Motor neuron (in vitro differentiated cells): ENCODE measurements at regions of chr10 and their contacts with region 1.

Region 1: GRCh38 chr10:116796910-116797513 is 52.3 kb upstream of the ENO4 start:
- ATAC-seq: peak; percentile 75 to 98 (median 84)
- H3K4me3 ChIP-seq: no peak overlapping the region
- H3K27ac ChIP-seq: no peak overlapping the region
- H3K4me1 ChIP-seq: peaks cover 2 to 6% of the 10 kb centered on the region in 2 donors

Region 2: GRCh38 chr10:116470768-116471415 is 326.1 kb before region 1 on chr10:
- in situ Hi-C with region 1: loop called in 1 of 9 experiments (anchors 25 kb)
- ATAC-seq: peak in 6 of 8 experiments; percentile 28 to 78 (median 54)
- H3K4me3 ChIP-seq: no peak overlapping the region
- H3K27ac ChIP-seq: no peak overlapping the region
- H3K4me1 ChIP-seq: peaks cover 2 to 12% of the 10 kb centered on the region in 2 donors

Region 3: GRCh38 chr10:116690356-116691322 is 106.4 kb before region 1 on chr10:
- in situ Hi-C with region 1: loop called in 4 of 9 experiments (anchors 25 kb)
- ATAC-seq: peak in 5 of 8 experiments; percentile 40 to 52 (median 48)
- H3K4me3 ChIP-seq: no peak overlapping the region
- H3K27ac ChIP-seq: no peak overlapping the region
- H3K4me1 ChIP-seq: peaks cover 10 to 11% of the 10 kb centered on the region in 2 donors

Region 4: GRCh38 chr10:116985611-116986010 is 188.6 kb after region 1 on chr10:
- in situ Hi-C with region 1: no loop called
- ATAC-seq: no peak
- H3K4me3 ChIP-seq: no peak overlapping the region
- H3K27ac ChIP-seq: no peak overlapping the region
- H3K4me1 ChIP-seq: no peaks in the 10 kb centered on the region

Region 5: GRCh38 chr10:117096599-117097201 is 299.7 kb after region 1 on chr10:
- in situ Hi-C with region 1: no loop called
- ATAC-seq: no peak
- H3K4me3 ChIP-seq: no peak overlapping the region
- H3K27ac ChIP-seq: no peak overlapping the region
- H3K4me1 ChIP-seq: peaks cover 3 to 12% of the 10 kb centered on the region in 2 donors

Region 6: GRCh38 chr10:117167789-117168674 is 371.0 kb after region 1 on chr10:
- in situ Hi-C with region 1: loop called in 7 of 9 experiments (anchors 5 to 25 kb)
- ATAC-seq: peak; percentile 83 to 93 (median 88)
- H3K4me3 ChIP-seq: peak overlapping the region in 3 of 5 donors; percentile 9 to 20 (median 17)
- H3K27ac ChIP-seq: no peak overlapping the region
- H3K4me1 ChIP-seq: peaks cover 0 to 4% of the 10 kb centered on the region in 2 donors

Region 7: DNA sequence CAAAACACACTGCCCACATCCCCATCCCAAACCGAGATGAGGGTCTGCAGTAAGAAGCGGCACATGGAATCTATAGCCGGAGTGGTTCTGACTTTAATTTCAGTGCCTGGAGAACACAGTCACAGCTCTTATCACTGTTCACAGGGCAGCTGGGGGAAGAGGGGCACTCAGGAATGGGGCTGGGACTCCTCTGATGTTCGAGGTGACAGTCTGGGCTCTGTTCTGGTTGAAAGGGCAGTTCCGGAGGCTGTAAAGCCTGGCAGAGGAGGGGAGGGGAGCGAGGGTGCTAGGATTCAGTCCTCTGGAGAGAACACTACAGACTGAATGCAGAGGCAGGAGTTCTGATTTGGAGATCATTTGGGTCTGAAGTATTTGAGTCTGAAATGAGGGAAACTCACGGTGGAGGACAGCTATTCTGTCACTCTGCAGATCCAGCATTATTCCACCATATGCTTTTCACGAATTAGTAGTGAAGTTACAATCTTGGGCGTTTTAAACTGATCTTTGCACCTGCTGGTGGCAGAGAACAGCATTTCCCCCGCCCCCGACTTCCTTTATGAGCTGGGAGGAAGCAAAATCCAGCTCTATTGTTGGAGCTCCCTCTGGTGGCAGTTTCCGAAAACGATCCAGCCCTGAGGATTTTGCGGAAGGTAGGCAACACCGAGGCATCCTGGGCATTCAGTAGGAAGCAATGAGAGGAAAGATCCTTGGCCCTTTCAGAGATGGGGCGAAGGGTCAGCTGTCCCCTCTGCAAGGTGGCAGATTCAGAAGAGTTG is 377.6 kb after region 1 on chr10:
- in situ Hi-C with region 1: loop called (anchors 5 to 25 kb)
- ATAC-seq: peak; percentile 77 to 90 (median 82)
- H3K4me3 ChIP-seq: peak overlapping the region; percentile 24 to 35 (median 30)
- H3K27ac ChIP-seq: no peak overlapping the region
- H3K4me1 ChIP-seq: peaks cover 0 to 4% of the 10 kb centered on the region in 2 donors